ENCODE measurements at regions of chr7 and their contacts with region 1.

Region 1: GRCh38 chr7:139035586-139036353 is at the start of gene ZC3HAV1L:
- DNase-seq: peak; percentile 64 to 85 (median 78)
- H3K4me3 ChIP-seq: peak within 1 kb of the TSS; percentile 76
- H3K27ac ChIP-seq: peak within 1 kb of the TSS; percentile 67 to 83
- H3K4me1 ChIP-seq: peaks cover 2% of the 10 kb centered on the region
- H3K27me3 ChIP-seq: no peaks in the 10 kb centered on the region
- CTCF ChIP-seq: no peak
- EP300 ChIP-seq: no peak
- POLR2A ChIP-seq: no peak
- total RNA-seq, gene ZC3HAV1L: 21.3 to 46.4 (median 25.2) TPM

Region 2: GRCh38 chr7:138886501-138886917 is 149.3 kb before region 1 on chr7:
- intact Hi-C with region 1: loop called in 1 of 4 experiments (anchors 5 kb)
- DNase-seq: no peak
- H3K4me3 ChIP-seq: no peak overlapping the region
- H3K27ac ChIP-seq: no peak overlapping the region
- H3K4me1 ChIP-seq: peaks cover 2% of the 10 kb centered on the region
- H3K27me3 ChIP-seq: no peaks in the 10 kb centered on the region
- CTCF ChIP-seq: peak in 2 of 3 donors; percentile 30 to 34
- EP300 ChIP-seq: no peak
- POLR2A ChIP-seq: no peak

Region 3: GRCh38 chr7:139203992-139204391 is 168.2 kb after region 1 on chr7:
- intact Hi-C with region 1: no loop called
- DNase-seq: no peak
- H3K4me3 ChIP-seq: no peak overlapping the region
- H3K27ac ChIP-seq: no peak overlapping the region
- H3K4me1 ChIP-seq: no peaks in the 10 kb centered on the region
- H3K27me3 ChIP-seq: no peaks in the 10 kb centered on the region
- CTCF ChIP-seq: no peak
- EP300 ChIP-seq: no peak
- POLR2A ChIP-seq: no peak

Measured in ovary (tissue), 10 donors.